ENCODE measurements at regions of chr9 and their contacts with region 1.

Region 1: DNA sequence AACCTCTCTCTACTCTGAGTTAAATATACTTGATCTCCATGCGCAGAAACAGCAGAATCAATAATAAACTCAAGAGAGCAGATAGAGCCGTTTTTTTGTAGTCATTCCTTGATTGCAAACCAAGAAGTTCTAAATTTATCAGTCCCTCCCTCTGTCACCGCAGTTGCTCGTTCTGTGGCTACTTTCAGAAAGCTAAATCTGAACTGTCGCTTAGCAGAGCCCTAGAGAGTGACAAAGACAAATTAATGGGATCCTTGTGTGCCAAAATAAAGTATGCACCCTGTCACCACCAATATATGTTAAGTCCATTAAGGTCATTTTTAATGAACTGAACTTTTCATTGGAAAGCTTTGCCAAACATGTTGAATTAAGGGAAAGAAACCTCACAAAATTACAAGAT is 218.3 kb downstream of the ADAMTSL1 start:
- DNase-seq: no peak
- ATAC-seq: peak; percentile 31; the same call in 2 of the 3 replicates
- H3K4me3 ChIP-seq: no peak overlapping the region
- H3K27ac ChIP-seq: no peak overlapping the region
- H3K4me1 ChIP-seq: no peaks in the 10 kb centered on the region
- H3K27me3 ChIP-seq: no peaks in the 10 kb centered on the region
- CTCF ChIP-seq: no peak
- EP300 ChIP-seq: no peak
- POLR2A ChIP-seq: no peak
- RAD21 ChIP-seq: no peak

Region 2: DNA sequence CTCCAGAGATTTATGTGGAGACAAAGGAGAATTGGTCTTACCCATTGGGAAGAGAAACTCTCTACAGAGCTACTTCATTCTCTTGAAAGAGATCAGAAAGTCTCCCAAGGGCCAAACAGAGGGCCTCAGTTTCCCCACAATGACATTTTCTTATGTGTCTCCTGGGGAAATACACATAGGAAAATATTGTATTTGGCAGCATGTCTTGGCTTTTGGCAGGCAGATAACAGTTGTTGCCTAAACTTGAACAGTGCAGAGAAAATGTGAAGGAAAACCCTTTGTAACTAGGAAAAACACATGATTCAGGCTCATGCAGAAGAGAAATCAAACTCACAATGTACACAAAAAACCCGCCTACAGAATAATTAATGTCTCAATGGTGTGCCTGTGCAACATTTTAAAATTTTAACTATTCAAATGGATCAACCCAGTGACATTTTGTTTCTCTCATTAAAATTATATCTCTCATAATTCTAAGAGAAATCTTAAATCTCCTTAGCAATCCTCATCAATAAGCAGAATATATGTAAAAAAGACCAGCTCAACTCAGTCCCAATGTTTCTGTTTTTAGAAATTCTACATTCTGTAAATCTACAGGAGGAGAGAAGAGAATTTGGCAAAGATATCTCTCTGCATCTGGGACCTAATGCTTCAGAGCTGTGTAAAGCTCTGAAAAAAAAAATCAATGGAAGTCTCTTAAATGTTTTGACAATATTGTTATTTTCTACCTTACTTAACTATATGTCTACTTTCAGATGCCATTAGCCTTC is 13.3 kb before region 1 on chr9:
- CTCF ChIA-PET with region 1: no interaction called
- POLR2A ChIA-PET with region 1: no interaction called
- RAD21 ChIA-PET with region 1: no interaction called
- SMC1A ChIA-PET with region 1: interaction called, 11 read pairs
- in situ Hi-C with region 1: no loop called
- intact Hi-C with region 1: no loop called
- DNase-seq: no peak
- ATAC-seq: no peak
- H3K4me3 ChIP-seq: no peak overlapping the region
- H3K27ac ChIP-seq: no peak overlapping the region
- H3K4me1 ChIP-seq: no peaks in the 10 kb centered on the region
- H3K27me3 ChIP-seq: no peaks in the 10 kb centered on the region
- CTCF ChIP-seq: no peak
- EP300 ChIP-seq: no peak
- POLR2A ChIP-seq: no peak
- RAD21 ChIP-seq: no peak

Measured in GM12878 (cell line).